HCT116 (cell line): ENCODE measurements at regions of chr6 and their contacts with region 1.

Region 1: DNA sequence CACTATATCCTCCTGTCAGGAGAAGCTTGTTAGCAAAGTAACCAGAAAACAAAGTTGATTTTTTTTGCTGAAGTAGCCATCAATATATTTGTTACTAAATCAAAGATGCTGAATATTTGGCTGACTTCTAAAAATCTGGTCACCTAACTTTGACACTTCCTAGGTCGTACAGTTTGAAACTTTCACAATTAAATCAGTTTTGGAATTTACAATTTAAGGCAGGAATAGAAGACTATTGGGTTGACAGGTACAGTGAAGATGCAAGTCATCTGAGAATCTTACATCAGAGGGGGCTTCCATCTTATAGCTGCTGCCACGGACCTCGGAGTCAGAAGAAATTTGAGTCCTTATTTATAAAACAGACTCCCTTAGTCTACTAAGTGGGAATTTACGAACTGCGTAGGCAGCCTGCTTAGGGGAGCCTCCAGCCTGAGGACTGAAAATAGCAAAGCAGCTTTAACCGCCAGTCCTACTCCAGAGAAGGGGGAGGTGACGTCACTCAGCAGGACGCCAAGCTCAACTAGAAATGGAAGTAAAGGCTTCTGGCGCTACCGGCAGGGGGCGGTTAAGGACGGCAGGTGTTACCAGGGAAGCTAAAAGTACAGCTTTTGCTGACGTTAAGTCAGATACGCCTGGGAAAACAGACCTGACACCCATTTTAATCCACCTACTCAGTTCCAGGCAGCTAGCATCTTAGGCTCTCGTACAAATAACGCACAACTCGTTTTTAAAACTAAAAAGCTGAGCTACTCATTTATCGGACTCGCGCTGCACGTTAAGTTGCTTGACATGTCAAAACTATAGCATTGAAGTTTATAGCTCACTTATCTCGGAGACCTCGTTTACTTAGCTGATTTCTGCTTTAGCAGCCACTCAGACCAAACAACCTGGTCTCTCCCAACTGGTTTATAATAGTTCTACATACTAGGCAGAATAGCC is 61.1 kb upstream of the HFE start:
- DNase-seq: peak; percentile 92
- ATAC-seq: peak; percentile 38
- H3K4me3 ChIP-seq: peak overlapping the region; percentile 52 to 66
- H3K27ac ChIP-seq: peak overlapping the region; percentile 98
- H3K4me1 ChIP-seq: peaks cover 51 to 84% of the 10 kb centered on the region in 2 experiments
- H3K27me3 ChIP-seq: no peaks in the 10 kb centered on the region
- CTCF ChIP-seq: peak in 2 of 3 experiments; percentile 84 to 89; a peak in 4 of 6 replicates
- POLR2A ChIP-seq: no peak
- RAD21 ChIP-seq: no peak

Region 2: DNA sequence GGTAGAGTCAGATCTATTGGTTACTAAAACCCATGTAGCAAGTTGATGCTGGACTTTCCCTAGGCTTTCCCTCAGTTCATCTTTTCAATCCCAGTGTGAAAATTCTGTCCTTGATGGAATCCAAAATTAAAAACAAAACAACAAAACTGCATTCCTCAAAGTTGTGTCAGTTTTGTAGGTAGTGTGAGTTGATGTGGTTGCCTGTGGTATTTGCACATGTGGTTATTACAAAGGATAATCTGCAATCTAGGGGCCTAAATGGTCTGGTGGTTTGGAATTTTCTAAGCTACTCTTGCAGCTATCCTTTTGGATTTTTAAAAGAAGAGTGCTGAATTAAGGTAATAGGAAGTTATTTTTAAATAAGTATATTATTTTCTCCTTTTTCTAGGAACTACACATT is 506.3 kb before region 1 on chr6:
- CTCF ChIA-PET with region 1: no interaction called
- POLR2A ChIA-PET with region 1: no interaction called
- RAD21 ChIA-PET with region 1: no interaction called
- intact Hi-C with region 1: no loop called
- DNase-seq: no peak
- ATAC-seq: no peak
- H3K4me3 ChIP-seq: no peak overlapping the region
- H3K27ac ChIP-seq: no peak overlapping the region
- H3K4me1 ChIP-seq: no peaks in the 10 kb centered on the region
- H3K27me3 ChIP-seq: no peaks in the 10 kb centered on the region
- CTCF ChIP-seq: no peak
- POLR2A ChIP-seq: no peak
- RAD21 ChIP-seq: no peak

Region 3: DNA sequence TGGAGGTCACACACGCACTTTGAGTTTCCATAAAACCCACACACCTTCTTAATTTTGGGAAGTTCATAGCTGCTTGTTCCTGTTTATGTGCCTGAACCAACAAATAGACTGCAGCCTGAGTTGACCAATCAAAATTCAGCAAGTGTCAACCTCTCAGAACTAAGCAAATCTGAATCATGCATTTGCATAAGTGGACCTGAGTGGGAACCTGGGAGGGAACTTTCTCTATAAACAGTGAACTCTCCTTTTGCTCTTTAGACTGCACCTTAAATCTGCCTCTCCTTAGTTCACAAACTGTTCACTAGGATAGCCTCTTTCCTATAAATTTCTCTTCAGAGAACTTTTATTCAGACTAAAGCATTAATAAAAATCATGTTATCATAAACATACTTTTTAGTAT is 232.2 kb before region 1 on chr6:
- CTCF ChIA-PET with region 1: no interaction called
- POLR2A ChIA-PET with region 1: no interaction called
- RAD21 ChIA-PET with region 1: no interaction called
- intact Hi-C with region 1: no loop called
- DNase-seq: no peak
- ATAC-seq: no peak
- H3K4me3 ChIP-seq: no peak overlapping the region
- H3K27ac ChIP-seq: no peak overlapping the region
- H3K4me1 ChIP-seq: no peaks in the 10 kb centered on the region
- H3K27me3 ChIP-seq: no peaks in the 10 kb centered on the region
- CTCF ChIP-seq: no peak
- POLR2A ChIP-seq: no peak
- RAD21 ChIP-seq: no peak

Region 4: GRCh38 chr6:25971187-25971811 is 54.9 kb before region 1 on chr6:
- CTCF ChIA-PET with region 1: no interaction called
- POLR2A ChIA-PET with region 1: interaction called, 13 read pairs
- RAD21 ChIA-PET with region 1: no interaction called
- intact Hi-C with region 1: no loop called
- DNase-seq: peak; percentile 73
- ATAC-seq: peak; percentile 93
- H3K4me3 ChIP-seq: peak overlapping the region in 1 of 2 experiments; percentile 39; a peak in 2 of 4 replicates
- H3K27ac ChIP-seq: peak overlapping the region; percentile 59; the same call in 1 of the 2 replicates
- H3K4me1 ChIP-seq: peaks cover 16 to 19% of the 10 kb centered on the region in 2 experiments
- H3K27me3 ChIP-seq: no peaks in the 10 kb centered on the region
- CTCF ChIP-seq: no peak
- POLR2A ChIP-seq: no peak
- RAD21 ChIP-seq: no peak

Region 5: GRCh38 chr6:26012061-26012460 is 14.1 kb before region 1 on chr6:
- CTCF ChIA-PET with region 1: interaction called, 3 read pairs
- POLR2A ChIA-PET with region 1: interaction called, 47 read pairs
- RAD21 ChIA-PET with region 1: no interaction called
- intact Hi-C with region 1: no loop called
- DNase-seq: no peak
- ATAC-seq: no peak
- H3K4me3 ChIP-seq: no peak overlapping the region
- H3K27ac ChIP-seq: no peak overlapping the region
- H3K4me1 ChIP-seq: no peaks in the 10 kb centered on the region
- H3K27me3 ChIP-seq: no peaks in the 10 kb centered on the region
- CTCF ChIP-seq: no peak
- POLR2A ChIP-seq: no peak
- RAD21 ChIP-seq: no peak

Region 6: DNA sequence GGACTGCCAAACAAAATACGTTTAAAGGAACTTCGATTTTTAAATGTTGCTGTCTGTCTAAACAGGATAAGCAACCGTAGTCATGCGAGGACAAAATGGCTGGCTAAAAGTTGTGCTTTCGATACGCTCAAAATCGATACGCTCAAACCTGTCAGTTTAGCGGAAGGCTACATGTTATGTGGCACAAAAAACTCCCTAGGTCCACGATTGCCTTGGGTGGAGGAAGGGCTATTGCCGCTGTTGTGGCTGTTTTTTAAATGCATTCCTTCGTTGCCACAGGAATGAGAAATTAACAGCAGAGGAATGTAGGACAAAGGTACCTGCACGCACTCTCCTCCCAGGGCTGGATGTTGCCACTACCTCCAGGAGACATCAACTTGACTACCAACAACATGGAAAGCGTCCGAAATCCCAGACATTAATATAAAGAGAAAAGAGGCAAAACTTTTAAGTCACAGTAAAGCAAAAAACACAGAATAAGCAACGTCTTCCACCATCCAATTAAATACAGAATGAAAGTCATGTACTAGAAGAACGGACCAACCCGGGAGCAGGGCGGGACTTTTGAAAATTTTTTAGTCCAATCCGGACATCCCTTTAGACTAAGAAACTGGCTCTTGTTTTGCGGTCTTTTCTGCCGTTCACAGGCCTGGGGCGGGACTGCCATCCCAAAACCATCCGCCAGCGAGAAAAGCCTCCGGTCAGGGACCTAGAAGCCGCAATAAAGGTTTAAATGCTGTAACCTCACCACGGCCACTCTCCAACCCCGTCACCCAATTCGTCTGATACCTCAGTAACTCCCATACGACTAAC is 28.9 kb after region 1 on chr6:
- CTCF ChIA-PET with region 1: interaction called, 3 read pairs
- POLR2A ChIA-PET with region 1: interaction called, 202 read pairs
- RAD21 ChIA-PET with region 1: no interaction called
- intact Hi-C with region 1: loop called (anchors 1 kb)
- DNase-seq: peak; percentile 98
- ATAC-seq: peak; percentile 70
- H3K4me3 ChIP-seq: peak overlapping the region; percentile 52 to 73
- H3K27ac ChIP-seq: peak overlapping the region; percentile 85
- H3K4me1 ChIP-seq: peaks cover 41 to 68% of the 10 kb centered on the region in 2 experiments
- H3K27me3 ChIP-seq: no peaks in the 10 kb centered on the region
- CTCF ChIP-seq: 0 out of 6 replicates have a peak, but pooled peaks of 1 of the 3 experiments have one; percentile 5
- POLR2A ChIP-seq: no peak
- RAD21 ChIP-seq: peak; percentile 30

Region 7: DNA sequence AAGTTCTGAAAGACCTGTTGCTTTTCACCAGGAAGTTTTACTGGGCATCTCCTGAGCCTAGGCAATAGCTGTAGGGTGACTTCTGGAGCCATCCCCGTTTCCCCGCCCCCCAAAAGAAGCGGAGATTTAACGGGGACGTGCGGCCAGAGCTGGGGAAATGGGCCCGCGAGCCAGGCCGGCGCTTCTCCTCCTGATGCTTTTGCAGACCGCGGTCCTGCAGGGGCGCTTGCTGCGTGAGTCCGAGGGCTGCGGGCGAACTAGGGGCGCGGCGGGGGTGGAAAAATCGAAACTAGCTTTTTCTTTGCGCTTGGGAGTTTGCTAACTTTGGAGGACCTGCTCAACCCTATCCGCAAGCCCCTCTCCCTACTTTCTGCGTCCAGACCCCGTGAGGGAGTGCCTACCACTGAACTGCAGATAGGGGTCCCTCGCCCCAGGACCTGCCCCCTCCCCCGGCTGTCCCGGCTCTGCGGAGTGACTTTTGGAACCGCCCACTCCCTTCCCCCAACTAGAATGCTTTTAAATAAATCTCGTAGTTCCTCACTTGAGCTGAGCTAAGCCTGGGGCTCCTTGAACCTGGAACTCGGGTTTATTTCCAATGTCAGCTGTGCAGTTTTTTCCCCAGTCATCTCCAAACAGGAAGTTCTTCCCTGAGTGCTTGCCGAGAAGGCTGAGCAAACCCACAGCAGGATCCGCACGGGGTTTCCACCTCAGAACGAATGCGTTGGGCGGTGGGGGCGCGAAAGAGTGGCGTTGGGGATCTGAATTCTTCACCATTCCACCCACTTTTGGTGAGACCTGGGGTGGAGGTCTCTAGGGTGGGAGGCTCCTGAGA is 61.3 kb after region 1 on chr6 and contains the start of gene HFE:
- CTCF ChIA-PET with region 1: no interaction called
- POLR2A ChIA-PET with region 1: interaction called, 12 read pairs
- RAD21 ChIA-PET with region 1: no interaction called
- intact Hi-C with region 1: no loop called
- DNase-seq: no peak
- ATAC-seq: peak; percentile 76
- H3K4me3 ChIP-seq: peak within 1 kb of the TSS; percentile 72 to 85
- H3K27ac ChIP-seq: peak within 1 kb of the TSS; percentile 69
- H3K4me1 ChIP-seq: peaks cover 10 to 24% of the 10 kb centered on the region in 2 experiments; a peak in 3 of 4 replicates
- H3K27me3 ChIP-seq: no peaks in the 10 kb centered on the region
- CTCF ChIP-seq: peak in 1 of 3 experiments; percentile 15; a peak in 1 of 6 replicates
- POLR2A ChIP-seq: no peak
- RAD21 ChIP-seq: no peak
- total RNA-seq, gene HFE: 9.8 TPM

Region 8: GRCh38 chr6:26103770-26104456 is 77.8 kb after region 1 on chr6:
- CTCF ChIA-PET with region 1: interaction called, 10 read pairs
- POLR2A ChIA-PET with region 1: interaction called, 54 read pairs
- RAD21 ChIA-PET with region 1: no interaction called
- intact Hi-C with region 1: loop called (anchors 1 kb)
- DNase-seq: peak; percentile 95
- ATAC-seq: peak; percentile 74
- H3K4me3 ChIP-seq: peak overlapping the region; percentile 48 to 59
- H3K27ac ChIP-seq: peak overlapping the region; percentile 94
- H3K4me1 ChIP-seq: peaks cover 17 to 39% of the 10 kb centered on the region in 2 experiments
- H3K27me3 ChIP-seq: no peaks in the 10 kb centered on the region
- CTCF ChIP-seq: peak in 2 of 3 experiments; percentile 35 to 40; a peak in 2 of 6 replicates
- POLR2A ChIP-seq: peak; percentile 99
- RAD21 ChIP-seq: peak; percentile 42

Region 9: GRCh38 chr6:27146706-27147505 is 1120.7 kb after region 1 on chr6:
- CTCF ChIA-PET with region 1: interaction called, 3 read pairs
- POLR2A ChIA-PET with region 1: interaction called, 14 read pairs
- RAD21 ChIA-PET with region 1: no interaction called
- intact Hi-C with region 1: no loop called
- DNase-seq: peak; percentile 99
- ATAC-seq: peak; percentile 71
- H3K4me3 ChIP-seq: peak overlapping the region; percentile 69 to 70
- H3K27ac ChIP-seq: peak overlapping the region; percentile 97
- H3K4me1 ChIP-seq: peaks cover 26 to 55% of the 10 kb centered on the region in 2 experiments
- H3K27me3 ChIP-seq: no peaks in the 10 kb centered on the region
- CTCF ChIP-seq: no peak
- POLR2A ChIP-seq: peak; percentile 93
- RAD21 ChIP-seq: no peak